Naive thymus-derived CD4-positive, alpha-beta T cell (primary cell): ENCODE measurements at regions of chr7 and their contacts with region 1.

Region 1: GRCh38 chr7:105336009-105336408 is 52.7 kb downstream of the SRPK2 start:
- DNase-seq: peak in 3 of 9 donors; percentile 17 to 31 (median 17)
- ATAC-seq: no peak
- H3K4me3 ChIP-seq: no peak overlapping the region
- H3K4me3 Mint-ChIP-seq: no peak overlapping the region
- H3K27ac ChIP-seq: no peak overlapping the region
- H3K27ac Mint-ChIP-seq: no peak overlapping the region
- H3K4me1 ChIP-seq: peaks cover 0 to 6% of the 10 kb centered on the region in 2 donors
- H3K4me1 Mint-ChIP-seq: peaks cover 10 to 45% (median 30%) of the 10 kb centered on the region in 7 donors
- H3K27me3 ChIP-seq: no peaks in the 10 kb centered on the region
- H3K27me3 Mint-ChIP-seq: no peaks in the 10 kb centered on the region

Region 2: DNA sequence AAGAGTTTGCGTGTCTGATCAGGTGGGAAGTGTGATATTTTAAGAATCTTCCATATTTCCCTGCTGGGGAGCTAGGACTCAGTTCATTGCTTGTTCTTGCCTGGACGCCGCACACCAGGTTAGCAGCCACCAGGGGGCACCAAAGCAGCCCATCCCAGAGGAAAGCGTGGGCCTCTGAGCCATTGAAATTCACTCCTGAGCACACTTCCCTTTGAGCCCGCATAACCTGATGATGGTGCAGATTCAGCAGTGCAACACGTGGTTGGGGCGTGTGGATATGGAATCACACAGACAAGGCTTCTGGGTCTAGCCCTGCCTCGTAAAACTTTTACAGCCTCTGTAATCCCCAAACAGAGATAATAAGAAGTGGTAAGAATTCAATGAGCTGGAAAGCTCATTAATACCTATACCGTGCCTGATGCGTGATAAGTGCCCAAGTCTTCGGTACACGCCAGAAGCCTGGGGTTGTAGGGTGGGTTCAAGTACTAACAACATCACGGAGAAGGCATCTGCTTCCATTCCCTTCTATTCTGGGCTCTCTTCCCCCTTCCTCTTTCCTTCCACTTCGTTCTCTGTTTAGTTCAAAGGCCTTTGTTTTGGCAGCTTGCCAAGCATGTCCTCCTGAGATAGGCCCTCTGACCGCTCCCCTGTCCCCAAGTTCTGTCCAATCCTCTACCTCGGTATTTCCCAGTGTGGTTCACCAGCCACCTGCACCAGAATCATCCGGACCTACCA is 452.1 kb before region 1 on chr7:
- CTCF ChIA-PET with region 1: no interaction called
- POLR2A ChIA-PET with region 1: no interaction called
- intact Hi-C with region 1: loop called in 1 of 2 experiments (anchors 2 kb)
- DNase-seq: peak; percentile 43 to 79 (median 58)
- ATAC-seq: peak; percentile 92
- H3K4me3 ChIP-seq: no peak overlapping the region
- H3K4me3 Mint-ChIP-seq: peak overlapping the region in 4 of 10 donors; percentile 3 to 56 (median 34)
- H3K27ac ChIP-seq: no peak overlapping the region
- H3K27ac Mint-ChIP-seq: peak overlapping the region in 2 of 9 donors; percentile 12 to 39
- H3K4me1 ChIP-seq: no peaks in the 10 kb centered on the region
- H3K4me1 Mint-ChIP-seq: peaks cover 0 to 18% (median 5%) of the 10 kb centered on the region in 7 donors
- H3K27me3 ChIP-seq: no peaks in the 10 kb centered on the region
- H3K27me3 Mint-ChIP-seq: peaks cover 0 to 11% (median 0%) of the 10 kb centered on the region in 5 donors

Region 3: DNA sequence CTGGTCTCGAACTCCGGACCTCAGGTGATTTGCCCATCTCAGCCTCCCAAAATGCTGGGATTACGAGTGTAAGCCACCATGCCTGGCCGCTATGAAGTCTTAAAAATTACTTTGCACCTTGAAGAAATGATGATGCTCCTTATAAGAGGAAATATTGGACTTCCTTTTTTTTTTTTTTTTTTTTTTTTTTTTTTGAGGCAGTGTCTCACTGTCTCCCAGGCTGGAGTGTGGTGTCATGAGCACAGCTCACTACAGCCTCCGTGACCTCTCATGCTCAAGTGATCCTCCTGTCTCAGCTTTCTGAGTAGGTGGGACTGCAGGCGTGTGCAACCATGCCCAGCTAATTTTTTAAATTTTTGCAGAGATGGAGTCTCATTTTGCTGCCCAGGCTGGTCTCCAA is 256.7 kb before region 1 on chr7:
- CTCF ChIA-PET with region 1: no interaction called
- POLR2A ChIA-PET with region 1: no interaction called
- intact Hi-C with region 1: loop called in 1 of 2 experiments (anchors 5 kb)
- DNase-seq: no peak
- ATAC-seq: peak; percentile 31
- H3K4me3 ChIP-seq: no peak overlapping the region
- H3K4me3 Mint-ChIP-seq: no peak overlapping the region
- H3K27ac ChIP-seq: no peak overlapping the region
- H3K27ac Mint-ChIP-seq: peak overlapping the region in 2 of 9 donors; percentile 25 to 40
- H3K4me1 ChIP-seq: no peaks in the 10 kb centered on the region
- H3K4me1 Mint-ChIP-seq: peaks cover 0 to 36% (median 10%) of the 10 kb centered on the region in 7 donors
- H3K27me3 ChIP-seq: no peaks in the 10 kb centered on the region
- H3K27me3 Mint-ChIP-seq: no peaks in the 10 kb centered on the region

Region 4: GRCh38 chr7:105141068-105141467 is 194.9 kb before region 1 on chr7:
- CTCF ChIA-PET with region 1: interaction called, 4 read pairs
- POLR2A ChIA-PET with region 1: no interaction called
- intact Hi-C with region 1: loop called (anchors 1 to 2 kb)
- DNase-seq: peak in 2 of 9 donors; percentile 7 to 12
- ATAC-seq: no peak
- H3K4me3 ChIP-seq: no peak overlapping the region
- H3K4me3 Mint-ChIP-seq: no peak overlapping the region
- H3K27ac ChIP-seq: no peak overlapping the region
- H3K27ac Mint-ChIP-seq: no peak overlapping the region
- H3K4me1 ChIP-seq: no peaks in the 10 kb centered on the region
- H3K4me1 Mint-ChIP-seq: peaks cover 0 to 27% (median 13%) of the 10 kb centered on the region in 7 donors
- H3K27me3 ChIP-seq: no peaks in the 10 kb centered on the region
- H3K27me3 Mint-ChIP-seq: no peaks in the 10 kb centered on the region

Region 5: GRCh38 chr7:105352018-105352612 is 16.1 kb after region 1 on chr7:
- CTCF ChIA-PET with region 1: interaction called, 5 read pairs
- POLR2A ChIA-PET with region 1: interaction called, 3 read pairs
- intact Hi-C with region 1: loop called in 1 of 2 experiments (anchors 2 kb)
- DNase-seq: peak; percentile 22 to 88 (median 82)
- ATAC-seq: peak; percentile 99
- H3K4me3 ChIP-seq: peak overlapping the region; percentile 44
- H3K4me3 Mint-ChIP-seq: peak overlapping the region; percentile 74 to 89 (median 81)
- H3K27ac ChIP-seq: peak overlapping the region; percentile 48
- H3K27ac Mint-ChIP-seq: peak overlapping the region; percentile 73 to 98 (median 92)
- H3K4me1 ChIP-seq: peaks cover 62 to 67% of the 10 kb centered on the region in 2 donors
- H3K4me1 Mint-ChIP-seq: peaks cover 45 to 82% (median 66%) of the 10 kb centered on the region in 7 donors
- H3K27me3 ChIP-seq: no peaks in the 10 kb centered on the region
- H3K27me3 Mint-ChIP-seq: no peaks in the 10 kb centered on the region

Region 6: GRCh38 chr7:105365541-105366534 is 29.8 kb after region 1 on chr7:
- CTCF ChIA-PET with region 1: no interaction called
- POLR2A ChIA-PET with region 1: no interaction called
- intact Hi-C with region 1: no loop called
- DNase-seq: no peak
- ATAC-seq: no peak
- H3K4me3 ChIP-seq: no peak overlapping the region
- H3K4me3 Mint-ChIP-seq: peak overlapping the region in 1 of 10 donors; percentile 26
- H3K27ac ChIP-seq: no peak overlapping the region
- H3K27ac Mint-ChIP-seq: peak overlapping the region in 3 of 9 donors; percentile 34 to 54 (median 46)
- H3K4me1 ChIP-seq: peaks cover 10 to 11% of the 10 kb centered on the region in 2 donors
- H3K4me1 Mint-ChIP-seq: peaks cover 14 to 65% (median 49%) of the 10 kb centered on the region in 7 donors
- H3K27me3 ChIP-seq: no peaks in the 10 kb centered on the region
- H3K27me3 Mint-ChIP-seq: no peaks in the 10 kb centered on the region

Region 7: GRCh38 chr7:105429746-105430612 is 94.0 kb after region 1 on chr7:
- CTCF ChIA-PET with region 1: no interaction called
- POLR2A ChIA-PET with region 1: no interaction called
- intact Hi-C with region 1: loop called in 1 of 2 experiments (anchors 1 kb)
- DNase-seq: peak in 8 of 9 donors; percentile 9 to 66 (median 58)
- ATAC-seq: peak; percentile 76
- H3K4me3 ChIP-seq: no peak overlapping the region
- H3K4me3 Mint-ChIP-seq: no peak overlapping the region
- H3K27ac ChIP-seq: no peak overlapping the region
- H3K27ac Mint-ChIP-seq: peak overlapping the region in 1 of 9 donors; percentile 19
- H3K4me1 ChIP-seq: no peaks in the 10 kb centered on the region
- H3K4me1 Mint-ChIP-seq: peaks cover 0 to 5% (median 0%) of the 10 kb centered on the region in 7 donors
- H3K27me3 ChIP-seq: no peaks in the 10 kb centered on the region
- H3K27me3 Mint-ChIP-seq: no peaks in the 10 kb centered on the region

Region 8: GRCh38 chr7:105589356-105590077 is 253.5 kb after region 1 on chr7:
- CTCF ChIA-PET with region 1: interaction called, 4 read pairs
- POLR2A ChIA-PET with region 1: no interaction called
- intact Hi-C with region 1: loop called in 1 of 2 experiments (anchors 5 kb)
- DNase-seq: peak in 8 of 9 donors; percentile 16 to 61 (median 42)
- ATAC-seq: peak; percentile 87
- H3K4me3 ChIP-seq: no peak overlapping the region
- H3K4me3 Mint-ChIP-seq: no peak overlapping the region
- H3K27ac ChIP-seq: no peak overlapping the region
- H3K27ac Mint-ChIP-seq: peak overlapping the region in 3 of 9 donors; percentile 4 to 70 (median 69)
- H3K4me1 ChIP-seq: no peaks in the 10 kb centered on the region
- H3K4me1 Mint-ChIP-seq: peaks cover 0 to 17% (median 4%) of the 10 kb centered on the region in 7 donors
- H3K27me3 ChIP-seq: no peaks in the 10 kb centered on the region
- H3K27me3 Mint-ChIP-seq: peaks cover 0 to 9% (median 0%) of the 10 kb centered on the region in 5 donors